ENCODE measurements at regions of chr11 and their contacts with region 1.

Region 1: GRCh38 chr11:22169833-22170232 is 23.1 kb upstream of the ANO5 start:
- DNase-seq: no peak
- ATAC-seq: peak in 1 of 4 donors; percentile 50
- H3K4me3 ChIP-seq: no peak overlapping the region
- H3K27ac ChIP-seq: no peak overlapping the region
- H3K4me1 ChIP-seq: no peaks in the 10 kb centered on the region
- H3K27me3 ChIP-seq: no peaks in the 10 kb centered on the region
- CTCF ChIP-seq: peak in 3 of 4 donors; percentile 18 to 27 (median 19)

Region 2: DNA sequence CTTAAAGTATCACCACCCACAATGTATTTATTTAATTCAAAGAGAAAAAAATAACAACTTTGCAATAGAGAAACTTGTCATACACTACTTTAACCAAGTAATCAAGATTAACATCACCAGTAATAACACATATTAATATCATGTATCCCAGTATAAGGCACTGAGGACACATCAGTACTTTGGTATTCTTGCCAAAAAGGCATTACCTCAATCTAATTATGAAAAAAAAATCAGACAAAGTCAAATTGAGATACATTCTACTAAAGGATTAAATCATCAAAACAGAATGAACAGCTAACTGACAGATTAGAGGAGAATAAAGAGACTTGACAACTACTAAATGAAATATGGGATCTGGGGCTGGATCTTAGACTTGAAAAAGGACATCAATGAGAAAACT is 132.5 kb after region 1 on chr11:
- intact Hi-C with region 1: no loop called
- DNase-seq: no peak
- ATAC-seq: no peak
- H3K4me3 ChIP-seq: no peak overlapping the region
- H3K27ac ChIP-seq: no peak overlapping the region
- H3K4me1 ChIP-seq: no peaks in the 10 kb centered on the region
- H3K27me3 ChIP-seq: no peaks in the 10 kb centered on the region
- CTCF ChIP-seq: no peak

Region 3: GRCh38 chr11:22317656-22318055 is 147.8 kb after region 1 on chr11:
- intact Hi-C with region 1: loop called in 1 of 3 experiments (anchors 5 kb)
- DNase-seq: peak in 1 of 6 donors; percentile 36
- ATAC-seq: no peak
- H3K4me3 ChIP-seq: no peak overlapping the region
- H3K27ac ChIP-seq: no peak overlapping the region
- H3K4me1 ChIP-seq: no peaks in the 10 kb centered on the region
- H3K27me3 ChIP-seq: no peaks in the 10 kb centered on the region
- CTCF ChIP-seq: no peak